ENCODE measurements at regions of chr1 and their contacts with region 1.

Region 1: DNA sequence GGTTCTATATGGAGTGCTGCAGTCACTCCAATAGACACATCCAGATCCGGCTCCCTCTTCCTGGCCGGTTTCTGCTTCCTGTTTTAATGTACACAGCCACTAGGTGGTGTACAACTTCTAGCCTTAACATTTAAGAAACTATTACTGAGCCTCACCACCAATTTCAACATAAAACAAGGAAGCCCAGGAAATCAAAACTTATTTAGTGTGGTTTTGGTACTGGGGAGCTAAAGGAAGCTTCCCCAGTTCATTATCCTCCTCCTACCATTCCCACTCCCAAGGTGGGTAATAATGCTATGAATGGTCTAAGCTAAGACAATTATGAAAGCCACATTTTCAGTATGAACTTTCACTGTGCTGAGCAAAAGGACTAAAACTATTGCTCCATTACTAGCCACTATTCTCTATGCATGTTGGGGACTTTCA is 25.5 kb upstream of the MTMR11 start:
- DNase-seq: peak in 7 of 9 donors; percentile 39 to 62 (median 57)
- ATAC-seq: peak; percentile 88
- H3K4me3 ChIP-seq: no peak overlapping the region
- H3K4me3 Mint-ChIP-seq: no peak overlapping the region
- H3K27ac ChIP-seq: no peak overlapping the region
- H3K27ac Mint-ChIP-seq: peak overlapping the region in 3 of 9 donors; percentile 45 to 71 (median 64)
- H3K4me1 ChIP-seq: no peaks in the 10 kb centered on the region
- H3K4me1 Mint-ChIP-seq: peaks cover 6 to 24% (median 19%) of the 10 kb centered on the region in 7 donors
- H3K27me3 ChIP-seq: no peaks in the 10 kb centered on the region
- H3K27me3 Mint-ChIP-seq: no peaks in the 10 kb centered on the region

Region 2: DNA sequence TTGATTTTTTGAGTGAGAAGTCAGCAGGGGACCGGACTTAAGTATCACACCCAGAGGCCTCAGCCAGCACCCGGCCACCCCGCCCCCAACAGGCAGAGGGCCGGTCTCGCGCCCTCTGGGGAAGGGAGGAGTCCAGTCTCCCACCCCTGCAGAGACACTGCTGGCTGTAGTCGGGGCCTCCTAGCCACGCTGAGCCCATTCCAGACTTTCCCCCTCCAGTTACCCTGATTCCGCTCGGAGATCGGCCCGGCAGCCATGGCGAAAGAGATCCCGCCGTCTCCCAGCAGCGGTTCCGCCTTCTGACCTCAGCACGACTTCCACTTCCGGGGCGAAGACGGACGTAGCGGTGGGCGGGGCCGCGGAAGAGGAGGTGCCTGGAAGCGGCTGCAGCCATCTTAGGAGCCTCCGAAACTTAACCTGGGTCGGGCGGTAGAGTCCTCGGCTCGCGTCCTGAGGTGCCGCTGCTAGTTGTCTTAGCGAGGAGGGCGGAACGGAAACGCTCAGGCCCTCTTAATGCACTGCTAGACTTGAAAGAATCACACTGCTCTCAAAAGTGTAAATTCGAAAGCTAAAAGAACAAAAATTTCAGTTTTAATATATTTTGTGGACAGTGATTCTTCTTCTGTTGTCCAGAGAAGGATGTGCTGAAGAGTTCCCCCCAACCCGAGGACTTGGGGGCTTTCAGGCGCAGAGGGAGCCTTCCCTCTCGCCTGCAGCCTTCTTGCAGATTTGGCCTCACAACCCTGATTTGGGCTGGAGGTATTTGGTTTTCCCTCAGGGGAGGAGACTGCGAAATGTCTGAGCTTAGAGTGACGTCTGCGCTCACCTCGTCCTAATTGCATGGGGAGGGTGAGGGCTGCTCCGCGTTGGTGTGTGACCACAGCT is 34.4 kb before region 1 on chr1 and contains the start of gene SF3B4:
- CTCF ChIA-PET with region 1: interaction called, 3 read pairs
- POLR2A ChIA-PET with region 1: interaction called, 3 read pairs
- intact Hi-C with region 1: loop called (anchors 1 to 2 kb)
- DNase-seq: peak; percentile 89 to 96 (median 95)
- ATAC-seq: peak; percentile 98
- H3K4me3 ChIP-seq: peak within 1 kb of the TSS; percentile 82
- H3K4me3 Mint-ChIP-seq: peak within 1 kb of the TSS; percentile 91 to 99 (median 96)
- H3K27ac ChIP-seq: peak within 1 kb of the TSS; percentile 94
- H3K27ac Mint-ChIP-seq: peak within 1 kb of the TSS; percentile 96 to 99 (median 98)
- H3K4me1 ChIP-seq: peaks cover 19 to 30% of the 10 kb centered on the region in 2 donors
- H3K4me1 Mint-ChIP-seq: peaks cover 44 to 67% (median 49%) of the 10 kb centered on the region in 7 donors
- H3K27me3 ChIP-seq: no peaks in the 10 kb centered on the region
- H3K27me3 Mint-ChIP-seq: peaks cover 0 to 13% (median 5%) of the 10 kb centered on the region in 5 donors
- total RNA-seq, gene SF3B4: 39.0 to 103 (median 43.4) TPM

Region 3: GRCh38 chr1:149978547-149979023 is 16.4 kb after region 1 on chr1:
- CTCF ChIA-PET with region 1: no interaction called
- POLR2A ChIA-PET with region 1: no interaction called
- intact Hi-C with region 1: no loop called
- DNase-seq: no peak
- ATAC-seq: no peak
- H3K4me3 ChIP-seq: no peak overlapping the region
- H3K4me3 Mint-ChIP-seq: no peak overlapping the region
- H3K27ac ChIP-seq: no peak overlapping the region
- H3K27ac Mint-ChIP-seq: no peak overlapping the region
- H3K4me1 ChIP-seq: no peaks in the 10 kb centered on the region
- H3K4me1 Mint-ChIP-seq: peaks cover 5 to 23% (median 9%) of the 10 kb centered on the region in 7 donors
- H3K27me3 ChIP-seq: no peaks in the 10 kb centered on the region
- H3K27me3 Mint-ChIP-seq: no peaks in the 10 kb centered on the region

Region 4: DNA sequence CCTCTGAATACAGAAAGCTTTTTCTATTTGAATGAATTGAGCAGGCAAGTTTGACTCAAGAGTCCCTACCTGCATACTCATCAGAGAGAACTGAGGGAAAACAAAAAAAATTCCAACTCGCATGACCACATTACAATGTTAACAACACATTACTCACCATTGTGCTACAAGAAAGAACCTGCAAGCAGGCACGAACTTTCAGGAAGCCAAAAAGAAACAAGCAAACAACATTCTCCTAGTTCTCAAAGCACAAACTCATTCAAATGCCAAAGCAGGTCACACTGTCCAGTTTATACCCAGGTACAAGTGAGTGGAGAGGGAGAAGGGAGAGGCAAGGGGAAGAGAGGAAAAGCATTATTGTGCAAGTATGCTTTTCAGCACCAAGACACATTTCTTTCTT is 33.8 kb after region 1 on chr1:
- CTCF ChIA-PET with region 1: no interaction called
- POLR2A ChIA-PET with region 1: no interaction called
- intact Hi-C with region 1: no loop called
- DNase-seq: no peak
- ATAC-seq: no peak
- H3K4me3 ChIP-seq: no peak overlapping the region
- H3K4me3 Mint-ChIP-seq: peak overlapping the region in 1 of 10 donors; percentile 26
- H3K27ac ChIP-seq: no peak overlapping the region
- H3K27ac Mint-ChIP-seq: no peak overlapping the region
- H3K4me1 ChIP-seq: peaks cover 0 to 4% of the 10 kb centered on the region in 2 donors
- H3K4me1 Mint-ChIP-seq: peaks cover 11 to 24% (median 18%) of the 10 kb centered on the region in 7 donors
- H3K27me3 ChIP-seq: no peaks in the 10 kb centered on the region
- H3K27me3 Mint-ChIP-seq: no peaks in the 10 kb centered on the region

Region 5: DNA sequence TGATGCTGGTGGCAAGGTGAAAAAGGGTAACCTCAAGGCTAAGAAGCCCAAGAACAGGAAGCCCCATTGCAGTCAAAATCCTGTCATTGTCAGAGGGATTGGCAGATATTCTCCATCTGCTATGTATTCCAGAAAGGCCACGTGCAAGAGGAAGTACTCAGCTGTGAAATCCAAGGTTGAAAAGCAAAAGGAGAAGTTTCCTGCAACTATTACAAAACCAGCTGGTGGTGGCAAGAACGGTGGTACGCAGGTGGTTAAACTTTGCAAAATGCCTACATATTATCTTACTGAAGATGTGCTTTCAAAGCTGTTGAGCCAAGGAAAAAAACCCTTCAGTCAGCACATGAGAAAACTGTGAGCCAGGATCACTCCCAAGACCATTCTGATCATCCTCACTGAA is 91.8 kb after region 1 on chr1:
- CTCF ChIA-PET with region 1: interaction called, 19 read pairs
- POLR2A ChIA-PET with region 1: interaction called, 3 read pairs
- intact Hi-C with region 1: loop called (anchors 1 kb)
- DNase-seq: no peak
- ATAC-seq: no peak
- H3K4me3 ChIP-seq: no peak overlapping the region
- H3K4me3 Mint-ChIP-seq: no peak overlapping the region
- H3K27ac ChIP-seq: no peak overlapping the region
- H3K27ac Mint-ChIP-seq: no peak overlapping the region
- H3K4me1 ChIP-seq: peaks cover 0 to 6% of the 10 kb centered on the region in 2 donors
- H3K4me1 Mint-ChIP-seq: peaks cover 0 to 5% (median 2%) of the 10 kb centered on the region in 7 donors
- H3K27me3 ChIP-seq: no peaks in the 10 kb centered on the region
- H3K27me3 Mint-ChIP-seq: peaks cover 0 to 34% (median 0%) of the 10 kb centered on the region in 5 donors

Region 6: GRCh38 chr1:150168960-150169601 is 206.9 kb after region 1 on chr1:
- CTCF ChIA-PET with region 1: interaction called, 5 read pairs
- POLR2A ChIA-PET with region 1: no interaction called
- intact Hi-C with region 1: loop called (anchors 1 kb)
- DNase-seq: peak in 4 of 9 donors; percentile 27 to 52 (median 37)
- ATAC-seq: peak; percentile 77
- H3K4me3 ChIP-seq: no peak overlapping the region
- H3K4me3 Mint-ChIP-seq: no peak overlapping the region
- H3K27ac ChIP-seq: no peak overlapping the region
- H3K27ac Mint-ChIP-seq: peak overlapping the region in 1 of 9 donors; percentile 33
- H3K4me1 ChIP-seq: no peaks in the 10 kb centered on the region
- H3K4me1 Mint-ChIP-seq: peaks cover 5 to 20% (median 9%) of the 10 kb centered on the region in 7 donors
- H3K27me3 ChIP-seq: no peaks in the 10 kb centered on the region
- H3K27me3 Mint-ChIP-seq: peaks cover 0 to 8% (median 0%) of the 10 kb centered on the region in 5 donors

Region 7: GRCh38 chr1:150281837-150282653 is 319.9 kb after region 1 on chr1 and contains the start of gene CIART:
- CTCF ChIA-PET with region 1: no interaction called
- POLR2A ChIA-PET with region 1: no interaction called
- intact Hi-C with region 1: loop called in 1 of 2 experiments (anchors 5 kb)
- DNase-seq: peak; percentile 34 to 88 (median 82)
- ATAC-seq: peak; percentile 95
- H3K4me3 ChIP-seq: peak within 1 kb of the TSS; percentile 58
- H3K4me3 Mint-ChIP-seq: peak within 1 kb of the TSS; percentile 84 to 98 (median 94)
- H3K27ac ChIP-seq: peak within 1 kb of the TSS; percentile 52
- H3K27ac Mint-ChIP-seq: peak within 1 kb of the TSS; percentile 80 to 98 (median 91)
- H3K4me1 ChIP-seq: peaks cover 11 to 23% of the 10 kb centered on the region in 2 donors
- H3K4me1 Mint-ChIP-seq: peaks cover 20 to 36% (median 32%) of the 10 kb centered on the region in 7 donors
- H3K27me3 ChIP-seq: no peaks in the 10 kb centered on the region
- H3K27me3 Mint-ChIP-seq: peaks cover 0 to 13% (median 0%) of the 10 kb centered on the region in 5 donors
- total RNA-seq, gene CIART: 1.4 to 2.6 (median 2.4) TPM